ENCODE measurements at regions of chr10 and their contacts with region 1.

Region 1: DNA sequence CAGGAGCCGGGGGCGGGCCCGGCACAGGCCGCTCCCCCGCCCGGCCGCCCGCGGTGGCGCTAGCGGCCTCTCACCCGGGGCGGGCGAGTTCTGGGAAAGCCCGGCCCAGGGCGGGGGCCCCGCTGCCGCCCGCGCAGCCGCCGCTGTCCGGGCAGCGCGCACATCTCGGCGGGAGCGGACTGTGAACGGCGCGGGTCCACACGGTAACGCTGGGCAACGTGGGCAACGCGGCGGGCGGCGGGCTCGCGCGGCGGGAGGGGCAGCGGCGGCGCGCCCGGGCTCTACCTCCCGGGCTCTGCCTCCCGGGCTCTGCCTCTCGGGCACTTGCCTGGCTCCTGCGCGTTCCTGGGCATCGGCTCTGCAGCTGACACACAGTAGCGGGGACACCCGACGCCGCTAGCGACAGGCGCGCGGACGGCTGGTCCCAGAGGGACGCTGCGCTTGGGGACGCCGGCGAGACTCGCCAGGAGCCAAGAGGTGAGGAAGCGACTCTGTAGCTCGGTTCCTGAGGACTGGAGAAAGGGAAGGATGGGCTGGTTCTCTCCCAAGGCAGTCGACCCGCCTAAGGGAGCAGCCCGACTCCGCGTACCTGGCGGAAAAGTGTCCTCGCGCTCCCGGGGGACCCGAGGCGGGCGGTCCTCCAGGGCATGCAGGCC is at the start of gene PLCE1:
- DNase-seq: peak in 1 of 2 donors; percentile 78
- H3K4me3 ChIP-seq: peak within 1 kb of the TSS; percentile 56 to 78
- H3K27ac ChIP-seq: peak within 1 kb of the TSS; percentile 62 to 76
- H3K4me1 ChIP-seq: peaks cover 0 to 20% of the 10 kb centered on the region in 2 donors
- H3K27me3 ChIP-seq: no peaks in the 10 kb centered on the region
- CTCF ChIP-seq: no peak
- total RNA-seq, gene PLCE1: 3.8 TPM

Region 2: DNA sequence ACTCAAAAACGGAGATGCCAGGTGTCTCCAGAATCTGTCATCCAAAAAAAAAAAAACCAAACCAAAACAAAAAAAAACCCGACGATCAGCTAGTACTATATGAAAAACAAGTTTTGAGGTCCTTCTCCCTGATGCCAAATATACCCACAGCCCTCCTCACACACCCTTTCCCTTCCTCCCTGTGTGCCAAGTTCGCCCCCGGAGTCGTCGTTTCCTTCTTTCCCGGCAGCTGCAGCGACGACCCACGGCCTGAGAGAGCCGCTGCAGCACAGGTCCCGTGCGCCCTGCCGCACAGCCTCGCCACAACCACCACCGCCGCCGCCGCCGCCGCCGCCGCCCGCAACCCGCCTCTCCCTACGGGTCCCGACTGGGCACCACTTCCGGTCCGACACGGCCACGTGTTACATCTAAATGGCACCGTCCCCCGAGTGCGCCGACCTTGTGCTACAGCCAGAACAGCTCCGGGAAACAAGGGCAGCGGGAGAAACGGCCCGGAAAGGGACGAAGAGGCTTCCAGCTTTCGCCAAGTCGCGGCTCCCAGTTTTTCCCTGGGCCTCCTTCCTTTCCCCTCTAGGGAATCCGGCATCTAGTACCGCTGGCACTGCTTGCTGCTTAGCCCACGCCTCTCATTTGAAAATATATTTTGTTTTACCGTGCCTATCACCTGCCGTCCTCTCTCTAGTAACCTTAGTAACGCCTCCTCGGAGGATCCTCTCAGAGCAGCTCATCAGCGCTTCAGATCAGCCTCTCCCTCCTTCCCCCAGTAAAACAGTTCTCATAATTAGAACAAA is 291.5 kb before region 1 on chr10 and contains the start of gene FRA10AC1:
- intact Hi-C with region 1: loop called (anchors 5 kb)
- DNase-seq: peak; percentile 65 to 96
- H3K4me3 ChIP-seq: peak within 1 kb of the TSS; percentile 65 to 74
- H3K27ac ChIP-seq: peak within 1 kb of the TSS; percentile 86 to 89
- H3K4me1 ChIP-seq: peaks cover 0 to 4% of the 10 kb centered on the region in 2 donors
- H3K27me3 ChIP-seq: no peaks in the 10 kb centered on the region
- CTCF ChIP-seq: peak; percentile 59 to 73 (median 73)
- total RNA-seq, gene FRA10AC1: 1.7 TPM

Region 3: DNA sequence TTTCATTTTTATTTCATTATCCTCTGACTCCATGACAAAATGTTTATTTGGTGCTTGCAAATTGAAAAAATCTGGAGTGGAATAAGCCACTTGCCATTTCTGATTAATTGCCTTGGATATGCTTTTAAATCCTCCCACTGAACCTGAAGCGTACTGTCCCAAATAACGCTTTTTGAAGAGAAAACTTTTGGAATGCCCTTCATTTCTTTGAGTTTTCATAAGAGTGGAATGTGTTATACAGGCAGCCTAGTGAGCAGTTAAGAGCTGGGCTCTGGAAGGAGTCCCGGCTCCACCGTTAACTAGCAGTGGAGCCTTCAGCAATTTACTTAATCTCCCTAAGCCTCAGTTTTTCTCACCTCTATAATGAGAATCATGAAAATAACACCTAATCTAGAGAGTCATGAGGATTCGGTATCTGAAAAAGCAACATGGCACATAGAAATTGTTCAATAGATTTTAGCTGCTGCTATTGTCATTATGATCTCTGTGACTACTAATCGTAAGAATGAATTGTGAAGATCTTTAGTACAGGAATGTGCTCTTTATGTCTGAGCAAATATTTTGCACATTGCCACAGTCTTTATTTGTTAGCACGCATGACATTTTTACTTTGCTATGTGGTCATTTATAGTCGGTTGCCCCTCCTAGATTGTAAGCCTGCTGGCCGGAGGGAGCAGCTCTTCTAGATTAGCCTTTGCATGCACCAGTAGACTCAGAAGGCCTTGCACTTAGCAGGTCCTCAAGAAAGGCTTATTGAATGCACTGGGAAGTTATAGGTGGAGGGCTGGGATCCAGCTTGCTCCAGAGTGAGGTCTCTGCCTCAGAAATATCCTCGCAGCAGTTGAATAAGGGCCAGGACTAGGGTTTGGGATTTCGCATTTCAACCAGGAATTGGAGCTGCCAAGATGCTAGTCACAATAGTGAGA is 59.2 kb after region 1 on chr10:
- intact Hi-C with region 1: no loop called
- DNase-seq: no peak
- H3K4me3 ChIP-seq: no peak overlapping the region
- H3K27ac ChIP-seq: no peak overlapping the region
- H3K4me1 ChIP-seq: peaks cover 0 to 3% of the 10 kb centered on the region in 2 donors
- H3K27me3 ChIP-seq: no peaks in the 10 kb centered on the region
- CTCF ChIP-seq: no peak

Region 4: DNA sequence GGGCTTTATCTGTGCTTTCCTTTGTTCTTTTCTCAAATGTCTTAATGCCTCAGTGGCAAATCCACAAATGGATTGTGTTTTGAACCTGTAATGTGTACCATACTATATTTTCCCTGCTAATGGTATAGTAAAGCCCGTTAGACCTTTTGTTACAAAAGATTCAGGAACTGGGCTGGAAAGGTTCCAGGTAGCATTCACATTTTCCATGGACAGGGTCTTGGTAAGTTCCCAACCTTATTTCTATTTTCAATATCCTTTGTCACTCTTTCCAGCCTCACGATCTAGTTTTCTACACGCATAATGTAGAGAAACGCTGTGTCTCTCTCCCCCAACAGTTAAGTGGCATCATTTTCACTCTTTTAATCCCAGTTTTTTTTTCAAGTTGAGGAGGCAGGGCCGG is 152.8 kb after region 1 on chr10:
- intact Hi-C with region 1: loop called (anchors 10 kb)
- DNase-seq: no peak
- H3K4me3 ChIP-seq: no peak overlapping the region
- H3K27ac ChIP-seq: peak overlapping the region; percentile 73
- H3K4me1 ChIP-seq: peaks cover 3 to 23% of the 10 kb centered on the region in 2 donors
- H3K27me3 ChIP-seq: no peaks in the 10 kb centered on the region
- CTCF ChIP-seq: no peak

Region 5: DNA sequence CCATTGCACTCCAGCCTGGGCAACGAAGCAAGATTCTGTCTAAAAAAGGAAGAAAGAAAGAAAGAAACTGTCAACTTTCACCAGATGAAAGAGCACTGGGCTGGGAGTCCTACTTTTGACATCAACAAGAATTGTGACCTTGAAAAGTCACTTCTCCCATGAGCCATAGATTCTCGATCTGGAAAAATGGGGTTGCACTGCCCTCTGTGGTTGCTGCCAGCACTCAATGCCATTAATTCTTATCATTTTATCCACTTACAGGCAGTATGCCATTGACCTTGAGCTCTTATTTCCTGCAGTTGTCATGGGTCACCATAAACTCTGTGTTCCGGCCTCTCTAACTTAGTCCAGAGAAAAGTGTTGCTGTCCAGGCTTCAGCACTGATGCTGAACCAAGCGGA is 231.7 kb after region 1 on chr10:
- intact Hi-C with region 1: loop called (anchors 5 kb)
- DNase-seq: no peak
- H3K4me3 ChIP-seq: no peak overlapping the region
- H3K27ac ChIP-seq: peak overlapping the region; percentile 49 to 57
- H3K4me1 ChIP-seq: peaks cover 0 to 29% of the 10 kb centered on the region in 2 donors
- H3K27me3 ChIP-seq: no peaks in the 10 kb centered on the region
- CTCF ChIP-seq: peak in 1 of 3 experiments; percentile 44

Region 6: DNA sequence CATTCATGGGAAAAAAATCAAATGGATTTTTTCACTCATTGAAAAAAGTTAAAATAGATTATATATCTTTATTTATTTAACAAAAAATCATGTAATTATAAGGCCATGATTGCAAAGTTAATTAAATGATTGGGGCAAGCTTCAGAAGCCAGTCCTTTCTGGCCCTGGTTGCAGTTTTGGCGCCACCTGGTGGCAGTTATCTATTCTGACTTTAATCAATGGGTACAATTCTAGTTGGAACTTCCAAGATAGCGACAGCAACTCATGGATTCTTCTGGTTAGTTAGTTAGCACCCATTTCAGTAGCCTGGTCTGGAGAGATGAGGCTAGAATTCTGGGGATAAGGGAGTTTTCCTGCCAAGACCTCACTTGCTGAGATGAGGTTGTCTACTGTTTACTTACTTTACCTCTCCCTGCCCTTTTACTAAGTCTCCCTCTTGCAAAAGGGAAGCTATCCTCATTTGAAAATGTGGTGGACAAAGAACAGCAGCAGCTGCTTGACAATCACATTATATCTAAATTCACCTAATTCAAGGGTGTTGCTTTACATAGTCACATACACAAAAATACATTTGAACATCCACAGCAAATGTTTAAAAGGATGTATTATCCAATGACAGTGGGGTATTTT is 326.5 kb after region 1 on chr10:
- intact Hi-C with region 1: loop called (anchors 1 kb)
- DNase-seq: peak in 1 of 2 donors; percentile 76
- H3K4me3 ChIP-seq: no peak overlapping the region
- H3K27ac ChIP-seq: no peak overlapping the region
- H3K4me1 ChIP-seq: peaks cover 0 to 7% of the 10 kb centered on the region in 2 donors
- H3K27me3 ChIP-seq: no peaks in the 10 kb centered on the region
- CTCF ChIP-seq: peak; percentile 58 to 90 (median 86)

Region 7: DNA sequence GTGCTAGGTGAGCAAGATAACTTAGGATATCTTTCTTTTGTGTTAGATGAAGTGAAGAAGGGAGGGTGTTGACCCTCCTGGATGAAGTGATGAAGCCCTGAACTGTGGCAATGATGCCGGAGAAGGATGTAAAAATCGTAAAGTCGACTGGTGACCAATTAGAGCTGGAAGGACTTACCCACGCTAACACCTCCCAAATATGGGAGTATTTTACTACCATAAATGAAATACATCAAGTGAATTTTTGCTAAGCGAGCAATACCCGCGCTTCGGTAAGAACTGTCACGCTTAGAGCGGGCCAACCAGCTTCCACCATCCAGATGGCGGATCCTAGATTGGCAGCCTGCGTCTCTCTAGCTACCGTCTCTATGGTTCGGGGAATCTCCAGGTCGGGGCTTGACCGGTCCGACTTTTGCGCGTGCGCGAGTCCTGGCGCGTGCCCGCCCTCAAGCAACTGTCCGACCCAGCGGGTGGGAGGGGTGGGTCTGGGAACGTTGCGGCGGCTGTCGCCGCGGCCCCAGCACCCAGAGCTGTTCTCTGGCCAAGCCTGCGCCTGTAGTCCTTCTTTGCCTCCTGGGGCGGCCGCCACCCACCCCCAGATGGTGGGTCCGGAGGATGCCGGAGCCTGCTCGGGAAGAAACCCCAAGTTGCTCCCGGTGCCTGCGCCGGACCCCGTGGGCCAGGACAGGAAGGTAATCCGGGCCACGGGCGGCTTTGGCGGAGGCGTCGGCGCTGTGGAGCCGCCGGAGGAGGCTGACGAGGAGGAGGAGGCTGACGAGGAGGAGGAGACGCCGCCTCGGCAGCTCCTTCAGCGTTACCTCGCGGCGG is 408.3 kb after region 1 on chr10 and contains the start of gene TBC1D12:
- intact Hi-C with region 1: loop called (anchors 5 kb)
- DNase-seq: peak; percentile 78 to 98
- H3K4me3 ChIP-seq: peak within 1 kb of the TSS; percentile 88 to 94
- H3K27ac ChIP-seq: peak within 1 kb of the TSS; percentile 91 to 95
- H3K4me1 ChIP-seq: peaks cover 0 to 6% of the 10 kb centered on the region in 2 donors
- H3K27me3 ChIP-seq: no peaks in the 10 kb centered on the region
- CTCF ChIP-seq: no peak
- total RNA-seq, gene TBC1D12: 9.4 TPM